Activated T-helper 2 cell treated with anti-CD3 and anti-CD28 coated beads, Interferon-gamma antibody, Interleukin-2, Interleukin-4, amounts not matched to agents 10 μg/mL and 5 μg/mL and 100 μg/mL, durations not matched to agents 14 hours and 24 hours and 36 hours (primary cell): ENCODE measurements at regions of chr3 and their contacts with region 1.

Region 1: GRCh38 chr3:189148081-189148507 is 23.7 kb upstream of the TPRG1 start:
- DNase-seq: peak; percentile 52
- H3K4me3 Mint-ChIP-seq: no peak overlapping the region
- H3K27ac Mint-ChIP-seq: no peak overlapping the region
- H3K4me1 Mint-ChIP-seq: peaks cover 41% of the 10 kb centered on the region
- H3K27me3 Mint-ChIP-seq: peaks cover 7% of the 10 kb centered on the region

Region 2: GRCh38 chr3:188584162-188584529 is 563.9 kb before region 1 on chr3:
- intact Hi-C with region 1: loop called (anchors 5 kb)
- DNase-seq: no peak
- H3K4me3 Mint-ChIP-seq: peak overlapping the region; percentile 13
- H3K27ac Mint-ChIP-seq: peak overlapping the region; percentile 86
- H3K4me1 Mint-ChIP-seq: peaks cover 30% of the 10 kb centered on the region
- H3K27me3 Mint-ChIP-seq: no peaks in the 10 kb centered on the region

Region 3: DNA sequence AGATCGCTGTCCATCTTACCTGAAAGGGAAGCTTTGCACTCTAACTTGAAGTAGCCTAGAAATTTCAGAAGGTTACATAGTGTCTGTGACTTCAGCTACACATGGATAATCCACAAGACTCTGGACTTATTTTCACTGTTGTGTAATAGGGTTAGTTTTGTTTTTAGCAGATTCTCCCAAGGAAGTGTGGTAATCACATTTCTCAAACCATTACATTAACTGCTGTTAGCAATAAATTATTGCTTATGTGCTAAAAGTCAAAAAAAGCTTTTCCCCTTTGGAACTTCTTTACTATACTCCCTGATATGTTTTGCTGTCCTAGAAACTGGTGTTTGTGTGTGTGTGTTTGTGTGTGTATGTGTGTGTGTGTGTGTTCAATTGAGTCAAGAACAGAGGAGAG is 328.2 kb before region 1 on chr3:
- intact Hi-C with region 1: loop called (anchors 10 kb)
- DNase-seq: no peak
- H3K4me3 Mint-ChIP-seq: no peak overlapping the region
- H3K27ac Mint-ChIP-seq: no peak overlapping the region
- H3K4me1 Mint-ChIP-seq: no peaks in the 10 kb centered on the region
- H3K27me3 Mint-ChIP-seq: no peaks in the 10 kb centered on the region

Region 4: DNA sequence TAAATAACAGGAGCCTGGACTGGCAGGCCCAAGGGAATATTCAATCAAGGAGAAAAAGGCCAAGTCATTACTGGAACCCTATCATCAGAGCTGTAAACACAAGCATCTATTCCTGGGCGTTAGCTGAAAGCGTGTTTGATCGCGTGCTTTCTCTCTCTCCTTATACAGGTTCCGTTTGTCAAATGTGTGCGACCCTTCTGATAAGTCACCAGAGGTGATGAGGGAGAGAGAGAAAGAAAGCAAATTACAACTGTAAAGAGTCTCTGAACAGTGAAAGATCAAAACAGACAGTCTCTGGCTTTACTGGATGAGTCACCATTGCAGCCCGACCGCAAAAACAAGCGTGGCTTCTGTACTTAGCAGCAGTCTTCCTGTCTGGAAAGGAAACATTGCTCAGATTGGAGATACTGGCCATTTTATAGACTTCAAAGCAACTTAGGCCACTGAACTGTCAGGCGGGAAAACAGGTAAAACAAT is 15.8 kb before region 1 on chr3:
- intact Hi-C with region 1: loop called (anchors 1 kb)
- DNase-seq: peak; percentile 79
- H3K4me3 Mint-ChIP-seq: peak overlapping the region; percentile 19
- H3K27ac Mint-ChIP-seq: peak overlapping the region; percentile 89
- H3K4me1 Mint-ChIP-seq: peaks cover 24% of the 10 kb centered on the region
- H3K27me3 Mint-ChIP-seq: no peaks in the 10 kb centered on the region

Region 5: GRCh38 chr3:189233225-189233858 is 85.2 kb after region 1 on chr3:
- intact Hi-C with region 1: loop called (anchors 2 kb)
- DNase-seq: no peak
- H3K4me3 Mint-ChIP-seq: no peak overlapping the region
- H3K27ac Mint-ChIP-seq: no peak overlapping the region
- H3K4me1 Mint-ChIP-seq: peaks cover 48% of the 10 kb centered on the region
- H3K27me3 Mint-ChIP-seq: peaks cover 18% of the 10 kb centered on the region